ENCODE measurements at regions of chr2 and their contacts with region 1.

Region 1: GRCh38 chr2:64052468-64053241 is 33.4 kb upstream of the VPS54 start:
- DNase-seq: no peak
- ATAC-seq: peak; percentile 22

Region 2: GRCh38 chr2:63093512-63093911 is 959.1 kb before region 1 on chr2:
- intact Hi-C with region 1: no loop called
- DNase-seq: no peak
- ATAC-seq: no peak

Region 3: GRCh38 chr2:64330281-64331113 is 277.8 kb after region 1 on chr2:
- intact Hi-C with region 1: loop called (anchors 5 kb)
- DNase-seq: peak; percentile 91
- ATAC-seq: peak; percentile 85

Measured in sciatic nerve (tissue), 2 donors.